Colonic mucosa (tissue), 4 donors: ENCODE measurements at regions of chr11 and their contacts with region 1.

Region 1: DNA sequence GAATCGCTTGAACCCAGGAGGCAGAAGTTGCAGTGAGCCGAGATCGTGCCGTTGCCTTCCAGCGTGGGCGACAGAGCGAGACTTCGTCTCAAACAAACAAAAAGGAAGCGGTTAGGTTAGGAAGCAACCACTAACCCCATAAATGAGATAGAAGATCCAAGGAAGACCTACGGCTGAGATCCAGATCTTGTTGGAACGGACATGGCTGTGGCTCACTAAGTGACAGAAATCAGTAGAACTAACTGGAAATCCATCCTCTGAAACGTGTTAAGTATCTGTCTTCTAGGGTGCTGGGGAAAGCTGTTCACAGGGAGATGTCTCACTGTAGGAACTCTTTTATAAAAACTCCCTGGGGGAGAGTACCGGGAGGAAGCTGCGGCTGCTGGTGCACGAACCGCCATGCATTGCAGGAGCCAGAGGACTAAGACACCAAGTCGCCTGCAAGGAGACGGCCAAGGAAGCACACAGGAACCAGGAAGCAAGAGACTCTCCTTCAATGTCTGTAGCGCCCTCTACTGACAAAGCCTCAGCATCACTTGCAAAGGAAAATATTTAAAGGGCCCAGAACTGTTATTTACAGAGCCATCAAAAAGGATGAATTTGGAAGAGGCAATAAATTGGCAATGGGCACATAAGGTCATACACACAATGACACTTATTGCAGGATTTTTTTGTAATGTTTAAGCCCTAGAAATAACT is 16.9 kb upstream of the SPTY2D1 start:
- DNase-seq: peak; percentile 66
- H3K4me3 ChIP-seq: no peak overlapping the region
- H3K27ac ChIP-seq: no peak overlapping the region
- H3K4me1 ChIP-seq: no peaks in the 10 kb centered on the region
- H3K27me3 ChIP-seq: no peaks in the 10 kb centered on the region
- CTCF ChIP-seq: peak; percentile 59

Region 2: DNA sequence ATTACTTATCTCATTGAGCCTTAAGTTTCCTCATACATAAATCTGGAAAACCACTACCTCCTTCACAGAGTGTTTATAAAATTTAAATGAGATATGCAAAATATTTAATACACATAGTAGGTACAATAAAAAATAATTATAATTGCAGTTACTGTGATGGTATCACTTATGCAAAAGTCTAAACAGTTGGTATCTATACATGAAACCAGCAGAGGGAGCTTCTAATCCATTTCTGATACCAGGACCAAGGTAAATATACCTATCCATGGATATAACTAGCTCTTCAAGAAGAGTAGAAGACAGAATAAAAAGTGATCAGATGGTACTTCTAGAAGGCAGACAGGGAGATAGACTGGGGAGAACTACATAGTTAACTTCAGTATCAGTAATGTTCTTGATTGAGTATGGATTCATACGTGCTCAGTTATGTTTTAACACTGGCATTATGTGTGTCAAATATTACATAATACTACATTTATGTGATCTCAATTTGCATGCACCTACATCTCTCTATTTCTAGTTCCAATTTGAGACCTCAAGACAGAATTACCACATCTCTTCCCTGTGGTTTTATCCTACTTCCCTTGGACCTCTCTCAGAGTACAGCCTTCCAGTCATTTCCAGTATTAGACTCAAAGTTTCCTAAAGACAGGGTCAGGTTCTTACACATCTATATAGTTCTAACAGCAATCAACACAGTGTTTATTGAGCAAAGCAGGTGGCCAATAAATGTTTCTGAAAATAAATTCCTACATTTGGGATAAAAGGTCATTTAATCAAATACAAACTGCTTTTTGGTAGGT is 110.6 kb before region 1 on chr11:
- intact Hi-C with region 1: loop called (anchors 5 kb)
- DNase-seq: no peak
- H3K4me3 ChIP-seq: no peak overlapping the region
- H3K27ac ChIP-seq: no peak overlapping the region
- H3K4me1 ChIP-seq: no peaks in the 10 kb centered on the region
- H3K27me3 ChIP-seq: no peaks in the 10 kb centered on the region
- CTCF ChIP-seq: peak; percentile 42

Region 3: GRCh38 chr11:18578975-18579598 is 71.9 kb before region 1 on chr11:
- intact Hi-C with region 1: no loop called
- DNase-seq: peak; percentile 82
- H3K4me3 ChIP-seq: no peak overlapping the region
- H3K27ac ChIP-seq: peak overlapping the region; percentile 32
- H3K4me1 ChIP-seq: no peaks in the 10 kb centered on the region
- H3K27me3 ChIP-seq: no peaks in the 10 kb centered on the region
- CTCF ChIP-seq: no peak